ENCODE measurements at regions of chr5 and their contacts with region 1.

Region 1: GRCh38 chr5:160199410-160199911 is 29.8 kb upstream of the FABP6 start:
- DNase-seq: peak; percentile 72
- ATAC-seq: peak; percentile 79
- H3K4me3 Mint-ChIP-seq: peak overlapping the region; percentile 69
- H3K27ac Mint-ChIP-seq: no peak overlapping the region
- H3K4me1 Mint-ChIP-seq: peaks cover 41% of the 10 kb centered on the region
- H3K27me3 Mint-ChIP-seq: peaks cover 4% of the 10 kb centered on the region; the same call in 1 of the 2 replicates
- CTCF ChIP-seq: peak; percentile 92

Region 2: GRCh38 chr5:160054831-160055230 is 144.6 kb before region 1 on chr5:
- CTCF ChIA-PET with region 1: no interaction called
- POLR2A ChIA-PET with region 1: no interaction called
- DNase-seq: no peak
- ATAC-seq: no peak
- H3K4me3 Mint-ChIP-seq: no peak overlapping the region
- H3K27ac Mint-ChIP-seq: no peak overlapping the region
- H3K4me1 Mint-ChIP-seq: no peaks in the 10 kb centered on the region; the same call in 1 of the 2 replicates
- H3K27me3 Mint-ChIP-seq: no peaks in the 10 kb centered on the region
- CTCF ChIP-seq: no peak

Region 3: GRCh38 chr5:160165137-160166068 is 34.1 kb before region 1 on chr5:
- CTCF ChIA-PET with region 1: interaction called, 10 read pairs
- POLR2A ChIA-PET with region 1: interaction called, 9 read pairs
- DNase-seq: peak; percentile 64
- ATAC-seq: peak; percentile 82
- H3K4me3 Mint-ChIP-seq: peak overlapping the region; percentile 38
- H3K27ac Mint-ChIP-seq: peak overlapping the region; percentile 96
- H3K4me1 Mint-ChIP-seq: peaks cover 69% of the 10 kb centered on the region
- H3K27me3 Mint-ChIP-seq: no peaks in the 10 kb centered on the region
- CTCF ChIP-seq: no peak

Region 4: DNA sequence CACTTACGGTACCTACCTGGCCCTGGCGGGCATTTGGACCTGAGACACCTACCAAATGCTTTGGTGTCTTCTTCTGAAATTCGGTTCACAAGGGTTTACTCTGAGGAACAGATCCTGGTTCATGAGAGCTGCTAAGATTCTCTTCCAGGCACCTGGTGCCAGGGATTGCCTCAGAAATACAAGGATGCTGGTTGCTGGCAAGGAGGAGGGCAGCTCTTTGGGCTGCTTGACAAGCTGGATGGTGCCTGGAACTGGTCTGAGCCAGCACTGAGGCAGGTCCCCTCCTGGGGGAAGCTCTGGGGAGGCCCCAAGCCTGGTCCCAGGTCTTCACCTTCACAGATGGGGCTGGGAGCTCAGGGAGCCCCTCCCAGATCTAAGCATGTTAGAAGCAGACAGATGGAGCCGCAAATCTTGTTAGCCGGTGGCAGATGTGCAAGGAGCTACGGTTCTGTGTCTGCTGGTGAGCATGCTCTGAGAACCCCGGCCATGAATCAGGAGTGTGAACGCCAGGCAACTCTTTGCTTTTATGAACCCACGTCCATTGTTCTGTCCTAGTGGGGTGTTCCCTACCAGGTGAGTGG is 46.1 kb after region 1 on chr5:
- CTCF ChIA-PET with region 1: interaction called, 13 read pairs
- POLR2A ChIA-PET with region 1: no interaction called
- DNase-seq: no peak
- ATAC-seq: 0 out of 2 replicates have a peak, but pooled peaks have one; percentile 8
- H3K4me3 Mint-ChIP-seq: no peak overlapping the region
- H3K27ac Mint-ChIP-seq: no peak overlapping the region
- H3K4me1 Mint-ChIP-seq: peaks cover 11% of the 10 kb centered on the region
- H3K27me3 Mint-ChIP-seq: no peaks in the 10 kb centered on the region
- CTCF ChIP-seq: no peak

Region 5: GRCh38 chr5:160359816-160360215 is 160.4 kb after region 1 on chr5:
- CTCF ChIA-PET with region 1: interaction called, 10 read pairs
- POLR2A ChIA-PET with region 1: no interaction called
- DNase-seq: no peak
- ATAC-seq: peak; percentile 63
- H3K4me3 Mint-ChIP-seq: no peak overlapping the region
- H3K27ac Mint-ChIP-seq: no peak overlapping the region
- H3K4me1 Mint-ChIP-seq: peaks cover 18% of the 10 kb centered on the region
- H3K27me3 Mint-ChIP-seq: no peaks in the 10 kb centered on the region; the same call in 1 of the 2 replicates
- CTCF ChIP-seq: no peak